ENCODE measurements at regions of chr10 and their contacts with region 1.

Region 1: GRCh38 chr10:75235375-75236177 is at the start of gene COMTD1:
- DNase-seq: peak; percentile 96
- H3K4me3 Mint-ChIP-seq: peak within 1 kb of the TSS; percentile 80
- H3K27ac Mint-ChIP-seq: peak within 1 kb of the TSS; percentile 84
- H3K4me1 Mint-ChIP-seq: peaks cover 18% of the 10 kb centered on the region
- H3K27me3 Mint-ChIP-seq: no peaks in the 10 kb centered on the region
- total RNA-seq, gene COMTD1: 33.2 to 34.8 TPM

Region 2: DNA sequence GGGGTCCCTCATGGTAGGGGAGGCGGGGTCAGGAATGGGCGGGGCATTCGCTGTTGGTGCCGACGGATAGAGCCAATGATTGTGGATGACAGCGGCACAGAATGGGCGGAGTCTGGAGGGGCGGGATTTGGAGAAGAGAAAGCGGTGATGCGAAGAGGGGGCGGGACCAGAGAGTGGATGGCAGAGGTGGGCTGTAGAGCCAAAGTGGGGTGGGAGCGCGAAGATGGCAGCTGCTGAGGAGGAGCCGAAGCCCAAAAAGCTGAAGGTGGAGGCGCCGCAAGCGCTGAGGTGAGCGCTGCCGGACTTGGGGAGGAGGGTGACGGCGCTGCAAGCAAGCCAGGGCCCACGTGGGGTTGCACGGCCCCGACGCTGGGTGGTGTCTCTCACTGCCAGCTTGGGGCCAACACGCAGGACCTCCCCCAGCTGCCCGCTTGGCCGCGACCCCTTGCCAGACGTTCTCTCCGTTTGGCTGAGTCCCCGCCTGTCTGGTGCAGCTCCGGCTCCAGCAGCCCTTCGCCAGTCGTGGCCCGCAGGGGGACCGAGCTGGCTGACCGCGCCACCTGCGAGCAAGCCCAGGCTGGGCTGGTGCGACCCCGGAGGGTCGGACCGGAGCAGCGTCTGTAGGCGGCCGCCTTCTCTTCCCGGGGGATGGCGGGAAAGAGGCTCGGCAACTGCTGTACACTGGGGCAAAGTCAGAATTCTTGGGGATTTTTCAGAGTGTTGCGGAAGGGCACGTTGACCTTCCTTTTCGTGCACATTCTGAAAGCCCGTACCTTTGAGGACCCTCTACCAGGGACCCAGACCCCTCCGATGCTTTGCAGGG is 1084.3 kb before region 1 on chr10 and contains the start of gene ADK:
- CTCF ChIA-PET with region 1: no interaction called
- intact Hi-C with region 1: loop called (anchors 1 kb)
- DNase-seq: peak; percentile 100
- H3K4me3 Mint-ChIP-seq: no peak within 1 kb of the TSS
- H3K27ac Mint-ChIP-seq: peak within 1 kb of the TSS; percentile 33
- H3K4me1 Mint-ChIP-seq: peaks cover 31% of the 10 kb centered on the region
- H3K27me3 Mint-ChIP-seq: no peaks in the 10 kb centered on the region
- total RNA-seq, gene ADK: 43.4 to 43.9 TPM

Region 3: DNA sequence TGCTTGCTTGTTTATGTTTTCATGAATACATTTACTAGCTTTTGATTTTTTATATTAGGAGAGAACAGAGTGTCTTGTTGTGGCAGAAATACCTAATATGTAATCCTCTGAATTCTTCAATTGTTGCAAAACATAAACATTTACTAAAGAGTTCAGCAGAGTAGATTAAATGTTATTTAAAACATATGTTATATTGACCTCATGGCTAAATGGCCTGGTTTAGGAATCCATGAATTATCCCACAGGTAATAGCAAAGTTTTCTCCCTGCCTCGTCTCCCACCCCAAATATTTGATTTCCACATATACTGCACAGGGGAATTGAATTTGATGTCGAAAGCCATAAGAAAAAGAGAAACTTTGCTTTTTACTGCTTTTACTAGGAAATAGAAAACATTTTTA is 972.7 kb before region 1 on chr10:
- CTCF ChIA-PET with region 1: interaction called, 3 read pairs
- intact Hi-C with region 1: loop called (anchors 1 kb)
- DNase-seq: no peak
- H3K4me3 Mint-ChIP-seq: no peak overlapping the region
- H3K27ac Mint-ChIP-seq: no peak overlapping the region
- H3K4me1 Mint-ChIP-seq: peaks cover 26% of the 10 kb centered on the region
- H3K27me3 Mint-ChIP-seq: no peaks in the 10 kb centered on the region

Region 4: GRCh38 chr10:74738985-74739567 is 496.5 kb before region 1 on chr10:
- CTCF ChIA-PET with region 1: interaction called, 4 read pairs
- intact Hi-C with region 1: loop called (anchors 2 kb)
- DNase-seq: peak; percentile 46
- H3K4me3 Mint-ChIP-seq: no peak overlapping the region
- H3K27ac Mint-ChIP-seq: no peak overlapping the region
- H3K4me1 Mint-ChIP-seq: peaks cover 13% of the 10 kb centered on the region
- H3K27me3 Mint-ChIP-seq: no peaks in the 10 kb centered on the region

Region 5: GRCh38 chr10:75019370-75019769 is 216.2 kb before region 1 on chr10:
- CTCF ChIA-PET with region 1: interaction called, 4 read pairs
- intact Hi-C with region 1: loop called (anchors 2 kb)
- DNase-seq: no peak
- H3K4me3 Mint-ChIP-seq: no peak overlapping the region
- H3K27ac Mint-ChIP-seq: no peak overlapping the region
- H3K4me1 Mint-ChIP-seq: peaks cover 12% of the 10 kb centered on the region
- H3K27me3 Mint-ChIP-seq: no peaks in the 10 kb centered on the region

Region 6: GRCh38 chr10:75111367-75111906 is 124.1 kb before region 1 on chr10 and contains the start of gene SAMD8:
- CTCF ChIA-PET with region 1: interaction called, 10 read pairs
- intact Hi-C with region 1: loop called (anchors 1 kb)
- DNase-seq: peak; percentile 98
- H3K4me3 Mint-ChIP-seq: peak within 1 kb of the TSS; percentile 95
- H3K27ac Mint-ChIP-seq: peak within 1 kb of the TSS; percentile 97
- H3K4me1 Mint-ChIP-seq: peaks cover 44% of the 10 kb centered on the region
- H3K27me3 Mint-ChIP-seq: no peaks in the 10 kb centered on the region
- total RNA-seq, gene SAMD8: 15.3 to 16.9 TPM

Region 7: GRCh38 chr10:75210282-75211006 is 25.1 kb before region 1 on chr10 and contains the start of gene VDAC2:
- CTCF ChIA-PET with region 1: interaction called, 38 read pairs
- intact Hi-C with region 1: loop called (anchors 1 kb)
- DNase-seq: peak; percentile 92
- H3K4me3 Mint-ChIP-seq: peak within 1 kb of the TSS; percentile 100
- H3K27ac Mint-ChIP-seq: peak within 1 kb of the TSS; percentile 99
- H3K4me1 Mint-ChIP-seq: peaks cover 42% of the 10 kb centered on the region
- H3K27me3 Mint-ChIP-seq: no peaks in the 10 kb centered on the region
- total RNA-seq, gene VDAC2: 193 TPM